Esophagus muscularis mucosa (tissue), 4 donors: ENCODE measurements at regions of chr17 and their contacts with region 1.

Region 1: GRCh38 chr17:42508426-42509165 is 27.4 kb upstream of the NAGLU start:
- DNase-seq: no peak
- H3K4me3 ChIP-seq: no peak overlapping the region
- H3K27ac ChIP-seq: no peak overlapping the region
- H3K4me1 ChIP-seq: peaks cover 16 to 30% (median 18%) of the 10 kb centered on the region in 4 donors
- H3K27me3 ChIP-seq: no peaks in the 10 kb centered on the region
- CTCF ChIP-seq: no peak
- EP300 ChIP-seq: no peak
- POLR2A ChIP-seq: no peak

Region 2: DNA sequence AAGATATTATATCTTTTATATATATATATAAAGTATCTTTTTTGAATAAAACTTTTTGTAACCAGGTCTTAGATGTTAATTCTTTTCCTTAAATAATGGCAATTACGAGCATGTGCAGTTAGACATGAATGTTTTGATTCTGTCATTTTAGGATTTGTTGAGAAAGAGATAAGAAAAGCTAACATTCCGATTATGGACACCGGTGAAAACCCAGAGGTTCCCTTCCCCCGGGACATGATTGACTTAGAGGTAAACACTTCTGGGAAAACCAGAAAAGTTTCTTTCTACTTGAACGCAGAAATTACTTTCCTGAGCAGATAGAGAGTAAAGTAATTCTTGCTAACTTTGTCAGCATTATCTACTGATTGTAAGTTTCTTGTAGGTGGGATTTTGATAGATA is 40.7 kb before region 1 on chr17:
- intact Hi-C with region 1: loop called (anchors 5 kb)
- DNase-seq: no peak
- H3K4me3 ChIP-seq: no peak overlapping the region
- H3K27ac ChIP-seq: no peak overlapping the region
- H3K4me1 ChIP-seq: peaks cover 0 to 16% (median 8%) of the 10 kb centered on the region in 4 donors
- H3K27me3 ChIP-seq: no peaks in the 10 kb centered on the region
- CTCF ChIP-seq: no peak
- EP300 ChIP-seq: no peak
- POLR2A ChIP-seq: no peak